Activated T-helper 1 cell treated with anti-CD3 and anti-CD28 coated beads, Interleukin-12 subunit alpha, Interleukin-12 subunit beta, Interleukin-2, Interleukin-4 antibody, amounts not matched to agents 30 ng/mL and 10 ng/mL and 1 ng/mL, durations not matched to agents 14 hours and 24 hours and 36 hours (primary cell): ENCODE measurements at regions of chr9 and their contacts with region 1.

Region 1: GRCh38 chr9:109817846-109818472 is 38.0 kb downstream of the PALM2AKAP2 start:
- DNase-seq: peak; percentile 22
- H3K4me3 Mint-ChIP-seq: no peak overlapping the region
- H3K27ac Mint-ChIP-seq: no peak overlapping the region
- H3K4me1 Mint-ChIP-seq: peaks cover 9% of the 10 kb centered on the region
- H3K27me3 Mint-ChIP-seq: peaks cover 2% of the 10 kb centered on the region

Region 2: DNA sequence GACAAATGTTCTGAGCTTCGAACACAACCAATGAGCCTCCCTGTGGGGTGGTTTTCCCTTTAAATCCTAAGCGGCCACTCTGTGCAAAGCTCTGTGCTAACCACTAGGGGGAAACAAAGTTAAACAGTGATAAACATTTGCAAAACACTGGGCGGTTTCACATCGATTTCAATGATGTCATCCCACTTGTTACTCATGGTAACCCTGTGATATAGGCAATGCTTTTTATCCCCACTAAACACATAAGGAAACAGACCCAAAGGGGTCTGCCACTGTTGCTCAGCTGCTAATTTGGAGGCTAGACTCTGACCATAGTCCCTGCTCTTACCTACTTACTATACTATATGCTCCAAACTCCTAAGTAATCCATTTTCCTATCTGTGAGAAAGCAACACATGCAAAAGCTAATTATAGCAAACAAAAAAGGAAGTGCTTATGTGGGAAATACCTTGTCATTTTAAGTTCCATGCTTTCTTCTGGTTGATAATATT is 377.1 kb before region 1 on chr9:
- intact Hi-C with region 1: loop called (anchors 10 kb)
- DNase-seq: peak; percentile 71
- H3K4me3 Mint-ChIP-seq: no peak overlapping the region
- H3K27ac Mint-ChIP-seq: peak overlapping the region; percentile 85
- H3K4me1 Mint-ChIP-seq: peaks cover 34% of the 10 kb centered on the region
- H3K27me3 Mint-ChIP-seq: peaks cover 9% of the 10 kb centered on the region

Region 3: DNA sequence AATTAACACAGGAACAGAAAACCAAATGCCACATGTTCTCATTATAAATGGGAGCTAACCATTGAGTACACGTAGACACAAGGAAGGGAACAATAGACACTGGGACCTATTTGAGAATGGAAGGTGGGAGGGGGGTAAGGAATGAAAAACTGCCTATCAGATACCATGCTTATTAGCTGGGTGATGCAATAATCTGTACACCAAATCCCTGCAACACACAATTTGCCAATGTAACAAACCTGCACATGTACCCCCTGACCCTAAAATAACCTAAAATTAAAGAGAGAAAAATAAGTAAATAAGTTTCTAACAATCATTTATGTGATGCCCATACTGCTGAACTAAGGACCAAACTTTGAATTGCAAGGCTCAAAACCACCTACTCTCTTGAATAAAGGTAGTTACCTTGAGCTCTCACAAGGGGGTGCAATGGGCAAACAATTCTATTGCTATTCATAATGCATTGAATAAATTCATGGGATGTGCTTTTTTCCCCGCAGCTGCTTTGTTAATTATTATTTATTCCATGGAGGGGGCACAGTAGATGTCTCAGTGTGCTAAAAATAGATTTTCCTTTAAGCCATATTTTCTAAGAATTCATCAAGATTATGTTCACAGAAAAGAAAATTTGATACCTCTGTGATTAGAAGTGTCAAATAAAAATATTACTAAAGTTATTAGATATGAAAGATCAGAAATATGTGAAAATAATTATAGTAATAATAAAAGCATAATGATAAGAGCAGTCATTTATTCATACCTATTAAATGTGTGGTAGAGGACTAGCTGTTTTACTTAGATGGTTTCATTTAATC is 243.7 kb before region 1 on chr9:
- intact Hi-C with region 1: loop called (anchors 1 kb)
- DNase-seq: peak; percentile 14
- H3K4me3 Mint-ChIP-seq: no peak overlapping the region
- H3K27ac Mint-ChIP-seq: no peak overlapping the region
- H3K4me1 Mint-ChIP-seq: no peaks in the 10 kb centered on the region
- H3K27me3 Mint-ChIP-seq: peaks cover 19% of the 10 kb centered on the region

Region 4: DNA sequence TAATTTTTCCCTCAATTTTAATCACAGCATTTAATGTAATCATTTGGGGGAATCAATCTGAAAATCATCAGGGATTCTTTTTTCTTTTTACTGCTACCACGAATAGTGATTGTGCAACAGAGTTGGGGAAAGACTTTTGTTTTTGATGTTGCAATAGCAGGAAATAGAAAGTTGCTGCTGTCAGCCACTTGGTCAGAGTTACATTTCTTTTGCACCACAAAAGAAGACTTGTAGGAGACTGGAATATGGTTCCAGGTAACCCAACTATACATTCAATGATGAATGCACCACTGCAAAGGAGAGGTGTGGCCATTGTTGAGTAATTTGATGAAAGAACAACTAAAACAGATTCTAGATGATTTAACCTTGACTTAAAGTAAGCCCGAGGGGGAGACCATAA is 84.3 kb before region 1 on chr9:
- intact Hi-C with region 1: loop called (anchors 10 kb)
- DNase-seq: no peak
- H3K4me3 Mint-ChIP-seq: no peak overlapping the region
- H3K27ac Mint-ChIP-seq: no peak overlapping the region
- H3K4me1 Mint-ChIP-seq: peaks cover 17% of the 10 kb centered on the region
- H3K27me3 Mint-ChIP-seq: peaks cover 32% of the 10 kb centered on the region

Region 5: GRCh38 chr9:109779711-109780452 is 38.1 kb before region 1 on chr9 and contains the start of gene PALM2AKAP2:
- intact Hi-C with region 1: loop called (anchors 5 kb)
- DNase-seq: peak; percentile 15
- H3K4me3 Mint-ChIP-seq: peak within 1 kb of the TSS; percentile 83
- H3K27ac Mint-ChIP-seq: no peak within 1 kb of the TSS
- H3K4me1 Mint-ChIP-seq: peaks cover 22% of the 10 kb centered on the region
- H3K27me3 Mint-ChIP-seq: peaks cover 34% of the 10 kb centered on the region
- total RNA-seq, gene PALM2AKAP2: 2.2 and 5.5 TPM in 2 replicates

Region 6: GRCh38 chr9:110058304-110058953 is 240.5 kb after region 1 on chr9:
- intact Hi-C with region 1: loop called (anchors 2 kb)
- DNase-seq: peak; percentile 24
- H3K4me3 Mint-ChIP-seq: peak overlapping the region; percentile 11
- H3K27ac Mint-ChIP-seq: peak overlapping the region; percentile 83
- H3K4me1 Mint-ChIP-seq: peaks cover 57% of the 10 kb centered on the region
- H3K27me3 Mint-ChIP-seq: no peaks in the 10 kb centered on the region

Region 7: GRCh38 chr9:110217656-110218099 is 399.7 kb after region 1 on chr9:
- intact Hi-C with region 1: loop called (anchors 2 kb)
- DNase-seq: no peak
- H3K4me3 Mint-ChIP-seq: no peak overlapping the region
- H3K27ac Mint-ChIP-seq: no peak overlapping the region
- H3K4me1 Mint-ChIP-seq: peaks cover 6% of the 10 kb centered on the region
- H3K27me3 Mint-ChIP-seq: peaks cover 15% of the 10 kb centered on the region